ENCODE measurements at regions of chr1 and their contacts with region 1.

Region 1: GRCh38 chr1:19872190-19872589 is 10.0 kb upstream of the OTUD3 start:
- DNase-seq: peak; percentile 45 to 49
- H3K4me3 ChIP-seq: no peak overlapping the region
- H3K4me3 Mint-ChIP-seq: no peak overlapping the region
- H3K27ac Mint-ChIP-seq: no peak overlapping the region
- H3K4me1 ChIP-seq: peaks cover 16% of the 10 kb centered on the region; the same call in 1 of the 2 replicates
- H3K4me1 Mint-ChIP-seq: no peaks in the 10 kb centered on the region
- H3K27me3 ChIP-seq: no peaks in the 10 kb centered on the region
- H3K27me3 Mint-ChIP-seq: no peaks in the 10 kb centered on the region
- CTCF ChIP-seq: peak in 1 of 2 experiments; percentile 46

Region 2: GRCh38 chr1:19715334-19716203 is 156.6 kb before region 1 on chr1:
- CTCF ChIA-PET with region 1: interaction called, 4 read pairs
- POLR2A ChIA-PET with region 1: no interaction called
- intact Hi-C with region 1: loop called (anchors 1 kb)
- DNase-seq: peak; percentile 88 to 90
- H3K4me3 ChIP-seq: no peak overlapping the region
- H3K4me3 Mint-ChIP-seq: no peak overlapping the region
- H3K27ac Mint-ChIP-seq: no peak overlapping the region
- H3K4me1 ChIP-seq: peaks cover 5% of the 10 kb centered on the region; the same call in 1 of the 2 replicates
- H3K4me1 Mint-ChIP-seq: no peaks in the 10 kb centered on the region
- H3K27me3 ChIP-seq: no peaks in the 10 kb centered on the region
- H3K27me3 Mint-ChIP-seq: no peaks in the 10 kb centered on the region
- CTCF ChIP-seq: peak; percentile 60 to 72

Region 3: GRCh38 chr1:19825298-19825697 is 46.9 kb before region 1 on chr1:
- CTCF ChIA-PET with region 1: no interaction called
- POLR2A ChIA-PET with region 1: no interaction called
- intact Hi-C with region 1: no loop called
- DNase-seq: no peak
- H3K4me3 ChIP-seq: no peak overlapping the region
- H3K4me3 Mint-ChIP-seq: no peak overlapping the region
- H3K27ac Mint-ChIP-seq: no peak overlapping the region
- H3K4me1 ChIP-seq: no peaks in the 10 kb centered on the region
- H3K4me1 Mint-ChIP-seq: peaks cover 11% of the 10 kb centered on the region
- H3K27me3 ChIP-seq: no peaks in the 10 kb centered on the region
- H3K27me3 Mint-ChIP-seq: no peaks in the 10 kb centered on the region
- CTCF ChIP-seq: no peak

Measured in Caco-2 (cell line).